Dendritic cell treated with granulocyte-macrophage colony-stimulating factor and Interleukin-4, amounts not matched to agents 40 ng/mL and 50 ng/mL, for 4 days (primary cell): ENCODE measurements at regions of chr9 and their contacts with region 1.

Region 1: GRCh38 chr9:4679268-4680172 is at the start of gene CDC37L1:
- H3K4me3 Mint-ChIP-seq: no peak within 1 kb of the TSS
- H3K27ac Mint-ChIP-seq: no peak within 1 kb of the TSS
- H3K4me1 Mint-ChIP-seq: peaks cover 15% of the 10 kb centered on the region
- H3K27me3 Mint-ChIP-seq: peaks cover 1% of the 10 kb centered on the region

Region 2: DNA sequence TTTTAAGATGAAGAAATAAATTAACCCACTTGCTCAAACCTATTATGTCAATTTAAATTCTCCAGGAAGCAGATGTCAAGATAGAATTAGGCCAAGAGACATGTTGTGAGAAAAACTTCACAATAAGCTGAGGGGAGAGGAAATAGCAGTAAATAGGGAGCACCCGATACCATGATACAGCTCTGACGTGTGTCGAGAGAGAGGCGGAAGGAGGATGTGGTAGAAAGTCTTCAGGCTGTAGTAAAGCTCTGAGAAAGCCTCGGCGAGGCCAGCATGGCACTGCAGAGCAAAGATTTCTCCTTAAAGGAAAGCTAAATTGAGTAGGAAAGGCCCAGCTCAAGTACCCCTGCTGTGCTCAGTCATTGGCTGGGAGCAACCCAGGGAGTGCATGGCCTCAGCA is 1829.6 kb before region 1 on chr9:
- intact Hi-C with region 1: loop called (anchors 10 kb)
- H3K4me3 Mint-ChIP-seq: no peak overlapping the region
- H3K27ac Mint-ChIP-seq: no peak overlapping the region
- H3K4me1 Mint-ChIP-seq: no peaks in the 10 kb centered on the region
- H3K27me3 Mint-ChIP-seq: peaks cover 11% of the 10 kb centered on the region

Region 3: DNA sequence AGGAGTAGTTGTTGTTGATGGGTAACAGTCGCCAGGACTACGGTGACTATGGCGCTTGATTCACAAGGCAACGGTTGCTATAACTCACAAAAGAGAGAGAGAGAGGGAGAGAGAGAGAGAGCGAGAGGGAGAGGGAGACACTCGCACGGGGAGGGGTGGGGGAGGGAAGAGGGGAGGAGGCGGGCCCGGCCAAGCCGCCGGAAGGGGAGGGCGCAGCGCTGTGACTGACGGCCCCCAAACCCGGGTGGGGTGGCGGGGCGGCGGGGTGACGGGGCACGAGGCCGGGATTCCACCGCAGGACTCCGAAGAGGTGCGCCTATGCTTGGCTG is 1153.7 kb before region 1 on chr9 and contains the start of gene RFX3:
- intact Hi-C with region 1: loop called (anchors 10 kb)
- H3K4me3 Mint-ChIP-seq: peak within 1 kb of the TSS; percentile 96
- H3K27ac Mint-ChIP-seq: peak within 1 kb of the TSS; percentile 100
- H3K4me1 Mint-ChIP-seq: peaks cover 38% of the 10 kb centered on the region
- H3K27me3 Mint-ChIP-seq: no peaks in the 10 kb centered on the region

Region 4: GRCh38 chr9:4662108-4662988 is 17.2 kb before region 1 on chr9 and contains the start of gene PLPP6:
- intact Hi-C with region 1: loop called (anchors 1 kb)
- H3K4me3 Mint-ChIP-seq: peak within 1 kb of the TSS; percentile 78
- H3K27ac Mint-ChIP-seq: peak within 1 kb of the TSS; percentile 80
- H3K4me1 Mint-ChIP-seq: peaks cover 44% of the 10 kb centered on the region
- H3K27me3 Mint-ChIP-seq: peaks cover 28% of the 10 kb centered on the region

Region 5: DNA sequence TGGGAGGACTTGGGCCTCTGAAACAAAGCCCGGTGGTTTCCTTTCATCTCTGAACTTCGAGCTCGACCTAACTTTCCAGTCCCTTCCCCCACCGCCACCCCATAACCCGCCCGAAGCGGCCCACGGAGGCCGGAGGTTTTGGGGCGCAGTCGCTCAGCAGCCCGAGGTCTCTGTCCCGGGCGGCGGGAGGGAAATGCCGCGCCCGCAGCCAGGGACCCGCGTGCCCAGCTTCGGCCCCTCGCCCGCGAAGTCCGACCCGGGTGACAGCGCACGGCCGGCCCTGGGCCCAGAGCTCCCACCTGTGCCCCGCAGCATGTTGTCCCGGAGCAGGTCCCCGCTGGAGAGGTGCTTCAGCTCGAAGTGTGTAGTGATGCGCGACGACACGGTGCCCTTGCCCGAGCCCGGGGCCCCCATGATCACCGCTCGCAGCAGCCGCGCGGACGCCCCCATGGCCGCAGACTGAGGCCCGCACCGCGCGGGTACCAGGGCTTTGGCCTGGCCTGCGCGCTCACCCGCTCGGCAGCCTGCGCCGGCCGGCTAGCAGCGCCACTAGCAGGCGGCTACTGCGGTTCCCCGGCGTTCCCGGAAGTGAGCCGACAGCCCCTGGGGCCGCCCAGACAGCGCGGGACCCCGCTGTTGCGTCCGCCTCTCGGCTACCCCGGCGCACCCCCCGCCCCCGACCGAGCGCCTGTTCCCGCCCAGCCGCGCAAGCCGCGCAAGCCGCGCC is 61.3 kb after region 1 on chr9 and contains the start of gene AK3:
- intact Hi-C with region 1: loop called (anchors 5 kb)
- H3K4me3 Mint-ChIP-seq: peak within 1 kb of the TSS; percentile 87
- H3K27ac Mint-ChIP-seq: peak within 1 kb of the TSS; percentile 86
- H3K4me1 Mint-ChIP-seq: peaks cover 25% of the 10 kb centered on the region
- H3K27me3 Mint-ChIP-seq: no peaks in the 10 kb centered on the region

Region 6: GRCh38 chr9:4792572-4793458 is 113.3 kb after region 1 on chr9 and contains the start of gene RCL1:
- intact Hi-C with region 1: no loop called
- H3K4me3 Mint-ChIP-seq: peak within 1 kb of the TSS; percentile 90
- H3K27ac Mint-ChIP-seq: peak within 1 kb of the TSS; percentile 87
- H3K4me1 Mint-ChIP-seq: peaks cover 40% of the 10 kb centered on the region
- H3K27me3 Mint-ChIP-seq: peaks cover 21% of the 10 kb centered on the region

Region 7: DNA sequence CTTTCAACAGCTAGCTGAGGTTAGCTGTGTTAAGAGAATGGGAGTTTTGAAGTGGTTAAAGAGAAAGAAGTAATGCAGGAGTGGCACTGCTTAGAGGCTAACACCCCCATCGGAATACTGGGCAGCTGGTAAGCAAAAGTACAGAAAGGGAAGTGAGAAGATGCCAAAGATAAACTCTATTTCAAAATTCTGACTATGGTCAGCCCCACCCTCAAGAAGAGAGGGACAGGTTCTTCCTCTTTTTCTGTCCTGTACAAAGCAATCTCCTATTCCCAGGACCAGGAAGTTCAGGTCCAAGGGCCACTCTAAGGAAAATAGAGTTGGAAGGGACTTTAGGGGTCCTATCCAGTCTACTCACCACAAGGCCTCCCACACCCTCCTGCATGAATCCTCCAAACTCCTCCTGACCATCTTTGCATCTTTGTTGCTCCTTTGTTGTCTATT is 259.6 kb after region 1 on chr9:
- intact Hi-C with region 1: loop called (anchors 2 kb)
- H3K4me3 Mint-ChIP-seq: peak overlapping the region; percentile 31
- H3K27ac Mint-ChIP-seq: peak overlapping the region; percentile 72
- H3K4me1 Mint-ChIP-seq: peaks cover 52% of the 10 kb centered on the region
- H3K27me3 Mint-ChIP-seq: no peaks in the 10 kb centered on the region